Endothelial cell of umbilical vein (primary cell): ENCODE measurements at regions of chr18 and their contacts with region 1.

Region 1: GRCh38 chr18:3703732-3704176 is 253.8 kb downstream of the TGIF1 start:
- DNase-seq: peak; percentile 65
- H3K4me3 ChIP-seq: no peak overlapping the region
- H3K27ac ChIP-seq: no peak overlapping the region
- H3K4me1 ChIP-seq: peaks cover 2% of the 10 kb centered on the region
- H3K27me3 ChIP-seq: no peaks in the 10 kb centered on the region
- CTCF ChIP-seq: peak; percentile 65 to 70
- POLR2A ChIP-seq: no peak

Region 2: GRCh38 chr18:3692113-3692621 is 11.6 kb before region 1 on chr18:
- CTCF ChIA-PET with region 1: interaction called, 23 read pairs
- POLR2A ChIA-PET with region 1: no interaction called
- dilution Hi-C with region 1: no loop called
- intact Hi-C with region 1: no loop called
- DNase-seq: no peak
- H3K4me3 ChIP-seq: no peak overlapping the region
- H3K27ac ChIP-seq: no peak overlapping the region
- H3K4me1 ChIP-seq: no peaks in the 10 kb centered on the region
- H3K27me3 ChIP-seq: no peaks in the 10 kb centered on the region
- CTCF ChIP-seq: no peak
- POLR2A ChIP-seq: no peak

Region 3: DNA sequence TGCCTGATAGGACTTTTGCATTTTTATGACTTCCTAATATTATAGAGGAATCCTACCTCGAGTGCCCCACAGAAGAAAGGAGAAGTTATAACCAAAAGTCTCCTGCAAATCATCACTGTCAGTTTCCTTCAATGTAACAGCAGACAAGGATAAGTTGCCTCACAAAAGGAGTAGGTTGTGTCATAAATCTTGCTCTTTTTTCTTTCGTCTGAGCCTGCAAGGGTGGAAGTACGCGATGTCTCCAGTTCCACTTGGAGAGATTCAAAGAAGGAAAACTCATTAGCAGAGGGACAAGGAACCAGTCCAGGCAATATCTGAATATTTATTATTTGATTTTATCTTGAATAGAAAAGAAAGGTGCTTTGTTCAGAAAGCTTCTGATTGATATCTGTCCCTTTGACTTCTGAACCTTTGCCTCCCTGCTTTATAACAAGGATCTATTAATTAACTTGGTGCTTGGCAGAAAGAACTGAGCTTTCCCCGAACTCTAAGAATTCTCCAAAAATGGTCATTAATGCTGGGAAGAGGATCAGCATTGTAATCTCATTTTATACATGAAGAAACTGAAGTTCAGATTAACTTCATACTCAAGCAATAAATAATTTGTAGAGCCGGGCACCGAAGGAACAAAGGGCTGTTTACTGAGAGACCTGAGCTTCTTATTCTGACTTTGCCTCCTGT is 18.7 kb after region 1 on chr18:
- CTCF ChIA-PET with region 1: interaction called, 17 read pairs
- POLR2A ChIA-PET with region 1: no interaction called
- dilution Hi-C with region 1: no loop called
- intact Hi-C with region 1: no loop called
- DNase-seq: no peak
- H3K4me3 ChIP-seq: no peak overlapping the region
- H3K27ac ChIP-seq: no peak overlapping the region
- H3K4me1 ChIP-seq: peaks cover 6% of the 10 kb centered on the region
- H3K27me3 ChIP-seq: no peaks in the 10 kb centered on the region
- CTCF ChIP-seq: no peak
- POLR2A ChIP-seq: no peak

Region 4: GRCh38 chr18:3995476-3996102 is 291.8 kb after region 1 on chr18:
- CTCF ChIA-PET with region 1: interaction called, 31 read pairs
- POLR2A ChIA-PET with region 1: no interaction called
- dilution Hi-C with region 1: no loop called
- intact Hi-C with region 1: loop called (anchors 1 kb)
- DNase-seq: peak; percentile 78
- H3K4me3 ChIP-seq: no peak overlapping the region
- H3K27ac ChIP-seq: no peak overlapping the region
- H3K4me1 ChIP-seq: no peaks in the 10 kb centered on the region
- H3K27me3 ChIP-seq: no peaks in the 10 kb centered on the region
- CTCF ChIP-seq: peak; percentile 75 to 85
- POLR2A ChIP-seq: no peak

Region 5: DNA sequence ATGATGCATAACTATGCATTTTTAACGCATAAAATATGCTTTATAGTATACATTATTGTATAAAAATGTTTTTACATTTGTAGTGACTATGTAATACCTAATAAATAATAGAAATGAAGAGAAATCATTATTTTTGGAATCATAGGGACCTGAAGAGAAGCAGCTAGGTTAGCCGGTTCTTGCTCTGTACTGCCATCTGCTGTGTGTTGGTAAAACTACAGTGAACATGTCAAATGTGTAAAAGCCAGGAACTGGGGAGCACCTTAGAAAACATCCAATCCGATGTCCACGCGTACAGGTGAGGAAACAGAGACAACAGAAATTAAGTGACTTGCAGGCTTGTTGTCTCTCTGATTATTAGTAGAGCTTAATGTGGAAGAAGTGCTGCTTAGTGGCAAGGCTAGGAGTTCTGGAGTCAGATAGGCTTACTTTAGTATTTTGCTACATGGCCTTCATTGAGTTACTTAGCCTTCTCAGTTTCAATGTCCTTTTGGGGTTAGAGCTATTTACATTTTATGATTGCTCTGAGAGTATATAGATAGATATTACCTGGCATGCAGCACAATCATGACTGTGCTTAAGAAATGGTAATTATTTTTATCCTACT is 364.9 kb after region 1 on chr18:
- CTCF ChIA-PET with region 1: interaction called, 4 read pairs
- POLR2A ChIA-PET with region 1: no interaction called
- dilution Hi-C with region 1: no loop called
- intact Hi-C with region 1: loop called (anchors 1 kb)
- DNase-seq: peak; percentile 58
- H3K4me3 ChIP-seq: no peak overlapping the region
- H3K27ac ChIP-seq: no peak overlapping the region
- H3K4me1 ChIP-seq: no peaks in the 10 kb centered on the region
- H3K27me3 ChIP-seq: no peaks in the 10 kb centered on the region
- CTCF ChIP-seq: peak; percentile 52 to 66
- POLR2A ChIP-seq: no peak